CD4-positive, alpha-beta memory T cell (primary cell): ENCODE measurements at regions of chr6 and their contacts with region 1.

Region 1: GRCh38 chr6:33788694-33789549 is at the start of gene LEMD2:
- DNase-seq: peak; percentile 88 to 94 (median 90)
- H3K4me3 ChIP-seq: peak within 1 kb of the TSS; percentile 48 to 77
- H3K4me3 Mint-ChIP-seq: peak within 1 kb of the TSS; percentile 90 to 100 (median 98)
- H3K27ac ChIP-seq: peak within 1 kb of the TSS; percentile 90
- H3K27ac Mint-ChIP-seq: peak within 1 kb of the TSS; percentile 90 to 100 (median 99)
- H3K4me1 ChIP-seq: peaks cover 42% of the 10 kb centered on the region
- H3K4me1 Mint-ChIP-seq: peaks cover 35 to 53% (median 45%) of the 10 kb centered on the region in 4 donors
- H3K27me3 ChIP-seq: no peaks in the 10 kb centered on the region
- H3K27me3 Mint-ChIP-seq: peaks cover 0 to 5% of the 10 kb centered on the region in 2 donors
- total RNA-seq, gene LEMD2: 115 to 126 TPM

Region 2: DNA sequence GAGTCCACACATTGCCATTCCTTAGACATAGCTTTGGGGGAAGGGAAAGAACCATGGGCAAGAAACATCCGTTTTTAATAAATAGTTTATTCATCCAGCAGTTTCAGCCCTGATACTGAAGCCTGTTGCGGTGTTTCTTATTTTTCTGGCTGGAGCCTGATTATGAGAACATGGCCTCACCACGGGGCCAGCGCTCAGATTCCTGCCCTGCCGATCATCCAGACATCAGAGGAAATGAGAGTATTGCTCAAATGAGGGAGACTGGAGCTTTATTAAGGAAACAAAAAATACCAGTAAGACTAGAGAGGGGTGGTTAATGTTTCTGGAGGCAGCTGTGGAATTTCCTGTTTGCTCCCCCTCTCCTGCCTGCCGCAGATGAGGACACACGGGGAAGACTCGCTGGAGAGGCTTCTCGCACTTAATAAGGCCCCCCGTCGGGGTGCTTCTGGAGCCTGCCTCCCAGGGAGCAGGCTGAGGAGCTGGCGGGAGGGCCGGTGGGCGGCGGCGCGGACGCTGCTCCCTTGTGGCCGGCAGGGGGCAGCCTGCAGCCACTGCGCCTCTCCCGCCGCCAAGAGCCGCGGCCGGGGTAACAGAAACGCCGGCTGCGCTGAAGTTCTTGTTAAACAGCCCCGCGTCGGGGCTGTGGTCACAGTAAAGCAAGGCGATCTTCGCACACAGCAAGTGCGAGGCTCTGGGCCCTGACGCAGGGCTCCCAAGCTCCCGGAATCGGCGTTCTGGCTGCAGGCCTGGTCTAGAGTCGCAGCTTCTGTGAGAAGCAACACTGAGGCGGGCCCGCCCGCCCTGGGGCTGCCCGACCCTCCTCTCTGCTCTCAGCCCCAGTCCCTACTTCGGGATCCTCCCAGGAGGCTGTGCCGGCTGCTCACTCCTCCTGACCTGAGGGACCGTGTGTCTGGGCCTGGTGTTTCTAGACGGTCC is 17.5 kb before region 1 on chr6:
- CTCF ChIA-PET with region 1: interaction called, 31 read pairs
- POLR2A ChIA-PET with region 1: interaction called, 35 read pairs
- intact Hi-C with region 1: no loop called
- DNase-seq: peak; percentile 54 to 68 (median 60)
- H3K4me3 ChIP-seq: no peak overlapping the region
- H3K4me3 Mint-ChIP-seq: peak overlapping the region in 1 of 8 donors; percentile 29
- H3K27ac ChIP-seq: no peak overlapping the region
- H3K27ac Mint-ChIP-seq: peak overlapping the region in 6 of 7 donors; percentile 21 to 88 (median 50)
- H3K4me1 ChIP-seq: peaks cover 6% of the 10 kb centered on the region
- H3K4me1 Mint-ChIP-seq: peaks cover 10 to 15% (median 13%) of the 10 kb centered on the region in 4 donors
- H3K27me3 ChIP-seq: no peaks in the 10 kb centered on the region
- H3K27me3 Mint-ChIP-seq: no peaks in the 10 kb centered on the region

Region 3: DNA sequence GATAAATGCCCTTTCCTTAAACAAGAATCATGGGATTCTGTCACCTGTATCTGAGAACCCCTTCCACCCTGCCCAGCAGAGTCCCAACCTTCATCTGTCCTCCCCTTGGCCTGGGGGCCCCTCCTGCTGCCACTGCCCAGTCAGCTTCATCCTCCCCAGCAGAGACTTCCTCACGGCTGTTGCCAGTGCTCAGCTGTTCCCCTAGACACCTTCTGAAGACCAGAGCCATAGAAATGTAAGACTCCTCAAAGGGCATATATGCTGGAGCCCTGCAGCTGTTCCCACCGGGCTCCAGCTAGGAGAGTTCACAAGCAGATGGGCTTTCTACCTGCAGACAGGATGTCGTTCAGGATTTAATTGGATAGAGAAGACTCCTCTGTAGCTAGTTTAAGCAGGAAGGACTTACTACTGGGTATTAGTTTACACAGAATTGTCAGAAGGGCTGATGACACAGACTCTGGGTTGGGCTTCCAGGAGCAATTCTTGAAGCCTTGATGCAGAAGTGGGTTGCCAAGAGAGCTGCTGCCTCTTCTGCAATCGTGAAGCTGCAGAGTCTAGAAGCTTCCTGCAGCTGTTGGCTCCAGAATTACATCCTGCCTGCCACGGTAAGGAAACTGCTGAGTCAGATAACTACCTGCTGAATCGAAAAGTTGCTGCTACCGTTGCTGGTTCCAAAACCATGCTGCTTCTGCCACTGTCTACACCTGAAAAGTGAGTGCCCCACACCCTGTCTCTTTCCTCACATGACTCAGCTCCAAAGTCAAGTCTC is 72.0 kb after region 1 on chr6:
- CTCF ChIA-PET with region 1: interaction called, 3 read pairs
- POLR2A ChIA-PET with region 1: interaction called, 5 read pairs
- intact Hi-C with region 1: loop called (anchors 2 kb)
- DNase-seq: peak; percentile 44 to 59 (median 53)
- H3K4me3 ChIP-seq: no peak overlapping the region
- H3K4me3 Mint-ChIP-seq: peak overlapping the region in 7 of 8 donors; percentile 1 to 75 (median 57)
- H3K27ac ChIP-seq: no peak overlapping the region
- H3K27ac Mint-ChIP-seq: peak overlapping the region in 2 of 7 donors; percentile 26 to 43
- H3K4me1 ChIP-seq: peaks cover 70% of the 10 kb centered on the region
- H3K4me1 Mint-ChIP-seq: peaks cover 40 to 84% (median 59%) of the 10 kb centered on the region in 4 donors
- H3K27me3 ChIP-seq: no peaks in the 10 kb centered on the region
- H3K27me3 Mint-ChIP-seq: peaks cover 0 to 3% of the 10 kb centered on the region in 2 donors

Region 4: DNA sequence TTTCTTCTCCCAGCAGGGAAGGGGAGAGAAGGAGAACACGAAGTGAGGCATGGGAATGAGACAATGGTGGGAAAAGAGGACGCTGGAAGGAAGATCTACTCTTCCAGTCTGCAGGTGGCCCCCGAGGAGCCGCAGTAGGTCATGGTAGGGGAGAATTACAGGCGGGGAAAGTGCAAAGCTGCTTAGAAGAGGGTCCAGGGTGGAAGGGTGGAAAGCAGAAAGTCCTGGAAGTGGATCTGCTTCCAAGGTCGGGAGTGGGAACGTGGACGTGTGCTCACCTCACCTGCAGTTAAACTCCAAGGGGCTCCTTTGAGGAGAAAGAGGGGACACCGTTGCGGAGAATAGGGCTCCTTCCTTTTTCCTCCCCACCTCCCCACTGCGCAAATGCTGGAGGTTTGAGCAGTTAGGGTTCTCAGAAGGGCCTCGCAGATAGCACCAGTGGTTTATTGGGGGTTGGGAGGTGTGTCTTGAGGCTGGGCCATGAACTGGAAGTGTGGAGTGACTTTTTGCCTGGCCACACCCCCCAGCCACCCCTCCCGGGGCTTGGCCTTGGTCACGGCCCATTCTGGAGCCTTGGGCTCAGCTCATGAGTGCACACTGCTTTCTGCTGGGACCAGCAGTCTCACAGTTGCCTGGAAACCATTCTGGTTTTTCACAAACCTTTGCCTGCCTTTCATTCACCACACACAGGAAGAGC is 115.3 kb after region 1 on chr6:
- CTCF ChIA-PET with region 1: no interaction called
- POLR2A ChIA-PET with region 1: interaction called, 14 read pairs
- intact Hi-C with region 1: loop called (anchors 1 kb)
- DNase-seq: peak; percentile 76 to 84 (median 81)
- H3K4me3 ChIP-seq: peak overlapping the region; percentile 25 to 36
- H3K4me3 Mint-ChIP-seq: peak overlapping the region; percentile 62 to 83 (median 78)
- H3K27ac ChIP-seq: peak overlapping the region; percentile 51
- H3K27ac Mint-ChIP-seq: peak overlapping the region; percentile 84 to 94 (median 91)
- H3K4me1 ChIP-seq: peaks cover 64% of the 10 kb centered on the region
- H3K4me1 Mint-ChIP-seq: peaks cover 54 to 83% (median 69%) of the 10 kb centered on the region in 4 donors
- H3K27me3 ChIP-seq: no peaks in the 10 kb centered on the region
- H3K27me3 Mint-ChIP-seq: no peaks in the 10 kb centered on the region

Region 5: DNA sequence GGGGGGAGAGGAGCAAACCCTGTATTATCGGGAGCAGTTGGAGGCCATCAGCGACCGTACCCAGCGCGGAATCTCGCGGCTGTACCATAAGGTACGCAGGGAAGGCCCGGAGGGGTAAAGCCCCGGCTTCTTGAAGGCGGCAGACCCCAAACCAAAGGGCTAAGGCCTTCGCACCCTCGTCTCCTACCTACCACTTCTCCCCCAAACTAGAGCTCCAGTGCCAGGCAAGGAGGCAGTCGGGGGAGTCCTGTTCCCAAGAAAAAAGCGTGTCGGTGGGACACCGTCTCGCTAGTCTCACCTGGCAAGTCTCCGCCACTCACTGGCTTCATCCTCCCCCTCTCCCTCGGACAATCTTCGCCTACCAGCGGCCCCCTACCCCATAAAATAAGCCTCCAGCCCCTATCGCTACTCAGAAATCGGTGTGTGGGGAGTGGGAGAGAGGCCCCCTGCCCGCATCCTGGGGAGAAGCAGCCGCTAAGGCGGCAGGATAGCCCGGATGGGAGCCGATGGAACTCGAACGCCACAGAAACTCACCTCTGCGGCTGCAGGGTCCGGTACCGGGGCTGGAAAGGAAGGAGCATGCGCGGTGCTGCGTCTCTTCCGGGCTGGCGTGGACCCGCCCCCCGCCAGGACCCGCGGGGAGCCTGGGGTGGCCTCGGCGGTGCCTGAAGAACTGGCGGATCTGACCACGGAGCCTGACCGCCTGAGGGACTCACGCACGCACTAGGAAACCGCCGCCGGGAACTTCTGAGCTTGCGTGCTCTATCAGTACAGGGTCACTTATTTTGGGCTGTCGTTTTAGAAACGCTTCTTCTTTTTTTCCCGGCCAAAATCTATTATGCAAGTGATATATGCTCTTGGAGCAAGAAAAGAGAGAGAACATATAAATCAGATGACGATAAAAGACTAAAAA is 636.8 kb after region 1 on chr6 and contains the start of gene RPS10:
- CTCF ChIA-PET with region 1: no interaction called
- POLR2A ChIA-PET with region 1: no interaction called
- intact Hi-C with region 1: loop called (anchors 2 kb)
- DNase-seq: peak; percentile 85 to 90 (median 87)
- H3K4me3 ChIP-seq: peak within 1 kb of the TSS; percentile 80 to 95
- H3K4me3 Mint-ChIP-seq: peak within 1 kb of the TSS; percentile 97 to 99 (median 98)
- H3K27ac ChIP-seq: peak within 1 kb of the TSS; percentile 94
- H3K27ac Mint-ChIP-seq: peak within 1 kb of the TSS; percentile 96 to 99 (median 97)
- H3K4me1 ChIP-seq: peaks cover 30% of the 10 kb centered on the region
- H3K4me1 Mint-ChIP-seq: peaks cover 16 to 42% (median 32%) of the 10 kb centered on the region in 4 donors
- H3K27me3 ChIP-seq: no peaks in the 10 kb centered on the region
- H3K27me3 Mint-ChIP-seq: no peaks in the 10 kb centered on the region
- total RNA-seq, gene RPS10: 2,689 to 2,757 TPM